HepG2 (cell line): ENCODE measurements at regions of chr5 and their contacts with region 1.

Region 1: DNA sequence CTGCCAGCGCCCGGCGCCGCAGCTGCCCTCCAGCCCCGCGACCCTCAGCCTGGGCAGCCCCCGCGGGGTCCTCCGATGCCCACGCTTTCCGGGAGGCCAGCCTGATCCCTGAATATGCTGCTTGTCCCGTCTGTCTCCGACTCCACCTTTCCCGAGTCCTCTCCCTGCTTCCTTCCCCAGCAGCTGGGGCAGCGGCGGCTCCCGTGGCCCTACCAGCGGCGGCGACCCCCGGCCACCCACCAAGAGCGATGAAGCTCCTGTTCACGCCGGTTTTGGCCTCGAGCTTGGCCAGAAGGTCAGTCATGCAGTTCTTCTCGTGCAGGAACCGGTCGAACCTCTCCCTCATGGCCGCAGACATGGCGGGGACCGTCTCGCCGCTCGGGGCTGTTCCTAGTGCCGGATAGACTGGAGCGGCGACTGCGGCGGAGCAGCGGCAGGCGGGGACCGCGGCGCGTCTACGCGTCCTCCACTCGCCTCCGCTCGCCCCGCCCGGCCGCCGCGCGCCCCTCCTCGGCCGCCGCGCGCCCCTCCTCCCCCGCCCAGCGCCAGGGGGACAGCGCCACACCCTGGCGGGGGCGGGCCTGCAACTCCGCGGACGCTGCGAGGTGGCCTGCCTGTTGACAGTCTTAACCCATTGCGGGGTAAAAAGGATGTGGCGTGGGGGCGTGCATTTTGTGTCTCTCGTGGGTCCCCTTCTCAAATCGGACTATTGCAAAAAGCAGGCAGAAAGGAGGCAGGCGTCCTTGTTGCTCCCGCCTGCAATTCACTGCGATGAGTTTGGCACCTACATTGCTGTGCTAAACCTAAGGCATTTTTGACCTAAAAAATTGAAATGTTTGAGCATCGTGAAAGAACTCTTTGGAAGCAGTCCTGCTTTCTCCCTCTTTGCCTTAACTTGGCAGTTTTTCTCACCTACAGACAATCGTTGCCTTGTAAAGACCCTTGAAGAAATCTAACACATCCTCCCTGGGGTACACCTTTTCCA is at the start of gene REEP5:
- DNase-seq: peak; percentile 56
- ATAC-seq: peak; percentile 92
- H3K4me3 ChIP-seq: peak within 1 kb of the TSS; percentile 91 to 99 (median 98)
- H3K27ac ChIP-seq: peak within 1 kb of the TSS; percentile 91
- H3K4me1 ChIP-seq: peaks cover 50% of the 10 kb centered on the region
- H3K27me3 ChIP-seq: no peaks in the 10 kb centered on the region
- CTCF ChIP-seq: peak; percentile 81
- EP300 ChIP-seq: no peak
- POLR2A ChIP-seq: peak; percentile 93 to 95
- RAD21 ChIP-seq: peak; percentile 83
- total RNA-seq, gene REEP5: 26.3 and 49.4 TPM in 2 replicates

Region 2: DNA sequence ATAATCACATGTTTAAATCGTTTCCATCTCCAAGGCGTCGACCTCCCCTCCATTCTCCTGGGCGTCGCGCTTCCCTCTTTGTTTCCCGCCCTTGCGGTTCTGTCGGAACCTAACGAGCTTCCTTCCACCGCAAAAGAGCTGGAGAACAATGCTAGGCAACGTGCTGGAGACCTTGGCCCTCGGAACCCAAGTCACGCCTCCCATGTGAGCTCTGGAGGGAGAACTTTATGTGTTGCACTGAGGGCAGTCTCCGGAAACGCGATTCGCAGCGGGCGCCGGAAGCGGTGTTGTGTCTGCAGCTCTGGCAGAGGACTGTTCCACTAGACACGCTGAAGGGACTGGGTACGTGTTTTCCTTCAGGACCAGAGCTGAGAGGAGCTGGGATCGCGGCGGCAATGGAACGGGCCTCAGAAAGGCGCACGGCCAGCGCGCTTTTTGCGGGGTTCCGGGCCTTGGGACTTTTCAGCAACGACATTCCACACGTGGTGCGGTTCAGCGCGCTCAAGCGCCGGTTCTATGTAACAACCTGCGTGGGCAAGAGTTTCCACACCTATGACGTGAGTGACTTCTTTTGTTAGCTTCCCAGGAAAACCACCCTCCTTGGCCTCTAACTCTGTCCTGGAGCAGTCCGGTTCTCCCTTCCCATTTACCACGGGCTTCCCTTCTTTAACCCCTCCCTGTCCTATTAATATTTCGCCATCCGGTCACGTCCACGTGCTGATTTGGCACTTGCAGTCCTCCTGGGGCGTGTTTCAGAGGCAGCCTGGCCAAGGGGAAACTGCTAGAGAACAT is 1829.9 kb before region 1 on chr5 and contains the start of gene WDR36:
- CTCF ChIA-PET with region 1: no interaction called
- POLR2A ChIA-PET with region 1: no interaction called
- in situ Hi-C with region 1: no loop called
- intact Hi-C with region 1: loop called (anchors 5 kb)
- DNase-seq: peak; percentile 86
- ATAC-seq: peak; percentile 99
- H3K4me3 ChIP-seq: peak within 1 kb of the TSS; percentile 88 to 94 (median 90)
- H3K27ac ChIP-seq: peak within 1 kb of the TSS; percentile 75
- H3K4me1 ChIP-seq: peaks cover 30% of the 10 kb centered on the region
- H3K27me3 ChIP-seq: no peaks in the 10 kb centered on the region; a peak in 1 of 5 replicates
- CTCF ChIP-seq: 0 out of 2 replicates have a peak, but pooled peaks have one; percentile 11
- EP300 ChIP-seq: peak; percentile 34 to 41; a peak in 3 of 4 replicates
- POLR2A ChIP-seq: peak; percentile 91 to 92
- RAD21 ChIP-seq: 0 out of 2 replicates have a peak, but pooled peaks have one; percentile 33
- total RNA-seq, gene WDR36: 40.6 and 62.6 TPM in 2 replicates

Region 3: GRCh38 chr5:112860929-112861637 is 61.0 kb before region 1 on chr5 and contains the start of gene SRP19:
- CTCF ChIA-PET with region 1: no interaction called
- POLR2A ChIA-PET with region 1: interaction called, 10 read pairs
- in situ Hi-C with region 1: no loop called
- intact Hi-C with region 1: loop called (anchors 2 kb)
- DNase-seq: peak; percentile 97
- ATAC-seq: peak; percentile 96
- H3K4me3 ChIP-seq: peak within 1 kb of the TSS; percentile 85 to 100 (median 93)
- H3K27ac ChIP-seq: peak within 1 kb of the TSS; percentile 89
- H3K4me1 ChIP-seq: peaks cover 32% of the 10 kb centered on the region
- H3K27me3 ChIP-seq: no peaks in the 10 kb centered on the region; a peak in 1 of 5 replicates
- CTCF ChIP-seq: no peak
- EP300 ChIP-seq: 0 out of 4 replicates have a peak, but pooled peaks of 1 of the 2 experiments have one; percentile 13
- POLR2A ChIP-seq: peak; percentile 68 to 80; a peak in 3 of 4 replicates
- RAD21 ChIP-seq: peak; percentile 25; the same call in 1 of the 2 replicates
- total RNA-seq, gene SRP19: 143 and 214 TPM in 2 replicates

Region 4: GRCh38 chr5:112958093-112959088 is 36.3 kb after region 1 on chr5:
- CTCF ChIA-PET with region 1: no interaction called
- POLR2A ChIA-PET with region 1: interaction called, 14 read pairs
- in situ Hi-C with region 1: no loop called
- intact Hi-C with region 1: loop called (anchors 1 kb)
- DNase-seq: peak; percentile 65
- ATAC-seq: peak; percentile 73
- H3K4me3 ChIP-seq: no peak overlapping the region
- H3K27ac ChIP-seq: no peak overlapping the region
- H3K4me1 ChIP-seq: peaks cover 61% of the 10 kb centered on the region
- H3K27me3 ChIP-seq: no peaks in the 10 kb centered on the region
- CTCF ChIP-seq: no peak
- EP300 ChIP-seq: 0 out of 4 replicates have a peak, but pooled peaks of 1 of the 2 experiments have one; percentile 8
- POLR2A ChIP-seq: no peak
- RAD21 ChIP-seq: no peak

Region 5: DNA sequence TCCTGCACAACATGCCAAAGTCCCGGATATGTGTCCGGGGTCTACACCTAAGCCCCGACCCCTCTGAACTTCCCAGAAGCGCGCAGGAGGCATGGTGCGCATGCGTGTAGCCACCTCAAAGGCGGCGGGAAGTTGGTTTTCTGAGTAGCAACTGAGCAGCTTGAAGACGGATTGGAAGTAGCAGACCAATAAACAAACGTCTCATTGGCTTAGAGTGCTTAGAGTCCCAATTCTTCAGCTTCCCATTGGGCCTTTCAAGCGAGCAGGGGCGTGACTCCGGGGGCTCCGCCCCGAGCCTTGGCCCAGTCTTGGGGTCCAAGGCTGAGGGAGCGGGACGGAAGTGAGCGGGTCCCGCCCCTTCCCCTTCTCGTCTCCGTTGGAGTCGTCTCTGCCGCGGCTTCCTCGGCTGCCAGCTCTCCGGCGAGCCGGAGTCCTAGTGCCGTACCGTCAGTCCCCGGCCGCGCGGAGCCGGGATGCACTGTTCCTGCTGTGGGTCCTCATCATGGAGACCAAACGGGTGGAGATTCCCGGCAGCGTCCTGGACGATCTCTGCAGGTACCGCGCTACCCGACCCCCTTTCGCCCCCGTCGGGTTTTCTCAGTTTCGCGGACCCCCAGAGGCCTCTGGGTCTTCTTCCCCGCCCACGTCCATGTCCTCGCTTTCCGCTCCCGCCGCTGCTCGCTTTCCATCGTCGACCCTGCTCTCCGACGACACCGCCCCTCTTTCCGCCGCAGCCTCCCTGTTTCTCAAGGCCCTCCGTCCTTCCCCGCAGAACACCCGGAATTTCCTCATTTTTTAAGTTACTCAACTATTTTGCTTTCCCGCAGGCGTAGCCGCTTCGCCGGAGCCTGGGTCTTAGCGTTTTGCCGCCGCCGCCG is 54.5 kb after region 1 on chr5 and contains the start of gene DCP2:
- CTCF ChIA-PET with region 1: no interaction called
- POLR2A ChIA-PET with region 1: interaction called, 30 read pairs
- in situ Hi-C with region 1: no loop called
- intact Hi-C with region 1: loop called (anchors 5 kb)
- DNase-seq: peak; percentile 99
- ATAC-seq: peak; percentile 97
- H3K4me3 ChIP-seq: peak within 1 kb of the TSS; percentile 87 to 93 (median 88)
- H3K27ac ChIP-seq: peak within 1 kb of the TSS; percentile 86
- H3K4me1 ChIP-seq: peaks cover 42% of the 10 kb centered on the region
- H3K27me3 ChIP-seq: no peaks in the 10 kb centered on the region; a peak in 1 of 5 replicates
- CTCF ChIP-seq: no peak
- EP300 ChIP-seq: 0 out of 4 replicates have a peak, but pooled peaks of 1 of the 2 experiments have one; percentile 21
- POLR2A ChIP-seq: peak; percentile 86 to 89
- RAD21 ChIP-seq: no peak
- total RNA-seq, gene DCP2: 63.4 and 113 TPM in 2 replicates